ENCODE measurements at regions of chr17 and their contacts with region 1.

Region 1: DNA sequence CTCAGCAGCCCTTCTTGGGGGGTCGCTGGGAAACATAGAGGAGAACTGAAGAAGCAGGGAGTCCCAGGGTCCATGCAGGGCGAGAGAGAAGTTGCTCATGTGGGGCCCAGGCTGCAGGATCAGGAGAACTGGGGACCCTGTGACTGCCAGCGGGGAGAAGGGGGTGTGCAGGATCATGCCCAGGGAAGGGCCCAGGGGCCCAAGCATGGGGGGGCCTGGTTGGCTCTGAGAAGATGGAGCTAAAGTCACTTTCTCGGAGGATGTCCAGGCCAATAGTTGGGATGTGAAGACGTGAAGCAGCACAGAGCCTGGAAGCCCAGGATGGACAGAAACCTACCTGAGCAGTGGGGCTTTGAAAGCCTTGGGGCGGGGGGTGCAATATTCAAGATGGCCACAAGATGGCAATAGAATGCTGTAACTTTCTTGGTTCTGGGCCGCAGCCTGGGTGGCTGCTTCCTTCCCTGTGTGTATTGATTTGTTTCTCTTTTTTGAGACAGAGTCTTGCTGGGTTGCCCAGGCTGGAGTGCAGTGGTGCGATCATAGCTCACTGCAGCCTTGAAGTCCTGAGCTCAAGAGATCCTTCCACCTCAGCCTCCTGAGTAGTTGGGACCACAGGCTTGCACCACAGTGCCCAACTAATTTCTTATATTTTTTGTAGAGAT is 3.4 kb downstream of the STH start:
- DNase-seq: no peak
- H3K4me3 ChIP-seq: no peak overlapping the region
- H3K27ac ChIP-seq: no peak overlapping the region
- H3K4me1 ChIP-seq: peaks cover 8% of the 10 kb centered on the region
- H3K27me3 ChIP-seq: no peaks in the 10 kb centered on the region
- CTCF ChIP-seq: peak; percentile 93 to 99 (median 95)
- POLR2A ChIP-seq: no peak

Region 2: DNA sequence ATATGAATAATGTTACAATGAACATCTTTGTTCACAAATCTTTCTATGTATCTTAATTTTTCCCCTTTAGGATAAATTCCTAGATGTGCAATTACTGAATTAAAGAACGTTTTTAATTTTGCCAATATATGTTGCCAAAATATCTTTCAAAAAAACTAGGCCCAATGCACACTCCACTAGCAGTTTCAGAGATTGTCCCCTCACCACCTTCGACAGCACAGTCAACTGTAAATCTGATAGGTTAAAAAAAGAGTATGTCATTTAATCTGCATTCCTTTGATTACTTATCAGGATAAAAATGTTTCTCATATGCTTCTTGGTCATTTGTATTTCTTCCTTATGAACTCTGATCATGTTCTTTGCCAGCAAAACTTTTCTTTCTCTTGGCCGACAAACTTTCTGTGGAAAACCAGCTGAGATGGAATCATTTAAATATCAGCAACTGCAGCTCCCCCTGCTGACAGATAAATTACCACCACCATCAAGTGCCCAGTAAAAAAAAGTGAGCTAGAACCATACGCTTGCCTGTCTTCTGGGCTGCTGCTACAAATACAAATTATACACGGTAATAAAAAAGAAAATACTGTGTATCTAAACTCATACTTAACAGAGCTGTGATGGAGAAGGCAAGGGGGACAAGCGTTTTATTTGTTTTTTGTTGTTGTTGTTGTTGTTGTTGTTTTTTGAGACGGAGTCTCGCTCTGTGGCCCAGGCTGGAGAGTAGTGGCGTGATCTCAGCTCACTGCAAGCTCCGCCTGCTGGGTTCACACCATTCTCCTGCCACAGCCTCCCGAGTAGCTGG is 210.4 kb after region 1 on chr17:
- intact Hi-C with region 1: loop called (anchors 5 kb)
- DNase-seq: no peak
- H3K4me3 ChIP-seq: no peak overlapping the region
- H3K27ac ChIP-seq: no peak overlapping the region
- H3K4me1 ChIP-seq: peaks cover 29% of the 10 kb centered on the region
- H3K27me3 ChIP-seq: no peaks in the 10 kb centered on the region
- CTCF ChIP-seq: peak; percentile 50 to 86 (median 83)
- POLR2A ChIP-seq: no peak